Activated CD4-positive, alpha-beta T cell treated with anti-CD3 and anti-CD28 coated beads for 36 hours (primary cell): ENCODE measurements at regions of chr1 and their contacts with region 1.

Region 1: DNA sequence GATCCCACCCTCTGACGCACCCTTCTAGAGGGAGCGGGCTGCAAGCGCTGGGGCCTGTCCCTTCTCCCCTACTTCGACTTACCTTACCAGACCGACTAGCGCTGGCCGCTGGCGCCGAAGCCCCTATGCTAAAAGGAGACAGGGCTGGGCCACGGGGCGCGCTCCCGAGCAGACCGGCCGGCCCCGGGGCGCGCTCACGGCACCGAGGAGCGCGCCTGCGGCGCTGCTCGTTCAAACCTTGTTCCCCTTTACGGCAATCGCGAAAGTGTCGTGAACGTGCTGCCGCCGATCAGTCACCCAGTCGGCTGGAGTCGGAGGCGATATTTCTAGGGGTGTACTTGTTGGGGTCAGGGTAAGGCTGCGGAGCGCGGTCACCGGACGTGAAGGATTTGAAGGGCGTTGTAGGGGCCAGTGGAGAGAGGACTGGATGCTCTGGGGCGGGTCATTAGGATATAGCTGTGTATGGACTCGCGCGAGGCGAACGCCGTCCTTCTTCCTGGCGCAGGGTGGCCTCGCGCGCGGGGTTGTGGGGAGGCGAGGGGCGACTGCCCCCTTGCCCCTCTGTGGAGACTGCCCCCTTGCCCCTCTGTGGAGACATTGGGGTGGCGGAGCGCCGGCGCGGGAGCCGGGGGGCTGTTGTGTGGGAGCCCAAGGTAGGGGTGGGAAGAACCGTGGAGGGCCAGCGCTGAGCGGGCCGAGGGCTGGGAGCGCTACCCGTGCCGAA is at the starts of genes CEPT1 and DRAM2:
- DNase-seq: peak; percentile 98
- ATAC-seq: peak; percentile 78
- H3K4me3 Mint-ChIP-seq: peak within 1 kb of the TSS; percentile 95
- H3K27ac Mint-ChIP-seq: peak within 1 kb of the TSS; percentile 99
- H3K4me1 Mint-ChIP-seq: peaks cover 53% of the 10 kb centered on the region
- H3K27me3 Mint-ChIP-seq: no peaks in the 10 kb centered on the region
- total RNA-seq, gene CEPT1: 34.7 to 49.1 TPM
- total RNA-seq, gene DRAM2: 30.4 to 34.4 TPM

Region 2: GRCh38 chr1:110963691-110964399 is 176.3 kb before region 1 on chr1 and contains the start of gene LRIF1:
- CTCF ChIA-PET with region 1: no interaction called
- POLR2A ChIA-PET with region 1: no interaction called
- intact Hi-C with region 1: loop called in 1 of 2 experiments (anchors 5 kb)
- DNase-seq: peak; percentile 100
- ATAC-seq: peak; percentile 99
- H3K4me3 Mint-ChIP-seq: peak within 1 kb of the TSS; percentile 78
- H3K27ac Mint-ChIP-seq: peak within 1 kb of the TSS; percentile 94
- H3K4me1 Mint-ChIP-seq: peaks cover 30% of the 10 kb centered on the region
- H3K27me3 Mint-ChIP-seq: peaks cover 7% of the 10 kb centered on the region
- total RNA-seq, gene LRIF1: 15.1 to 15.4 TPM

Region 3: DNA sequence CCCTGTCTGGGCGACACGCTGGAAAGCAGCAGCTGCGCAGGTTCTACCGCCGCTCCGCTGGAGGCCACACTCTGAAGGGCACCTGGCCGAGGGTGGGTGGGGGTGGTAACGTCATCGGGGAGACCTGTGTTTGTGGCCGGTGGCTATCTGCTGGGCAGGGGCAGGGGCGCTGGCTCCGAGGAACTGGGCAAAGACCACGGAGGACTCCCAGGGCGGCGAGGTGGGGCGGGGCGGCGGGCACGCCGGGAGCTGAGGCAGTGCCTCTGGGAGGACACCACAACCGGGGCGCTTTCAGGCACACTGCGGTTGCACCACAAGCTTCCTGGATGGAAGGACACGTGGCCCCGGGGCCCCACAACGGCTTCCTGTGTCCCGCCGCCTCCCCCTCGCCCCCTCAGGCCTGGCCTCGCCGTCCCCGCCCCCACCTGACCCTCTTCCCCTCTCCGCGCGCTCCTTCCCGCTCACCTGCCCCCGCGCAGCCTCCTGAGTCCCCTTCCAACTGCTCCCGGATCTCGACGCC is 63.6 kb after region 1 on chr1:
- CTCF ChIA-PET with region 1: interaction called, 3 read pairs
- POLR2A ChIA-PET with region 1: interaction called, 3 read pairs
- intact Hi-C with region 1: loop called in 1 of 2 experiments (anchors 1 kb)
- DNase-seq: peak; percentile 92
- ATAC-seq: peak; percentile 27
- H3K4me3 Mint-ChIP-seq: peak overlapping the region; percentile 96
- H3K27ac Mint-ChIP-seq: peak overlapping the region; percentile 98
- H3K4me1 Mint-ChIP-seq: peaks cover 56% of the 10 kb centered on the region
- H3K27me3 Mint-ChIP-seq: no peaks in the 10 kb centered on the region

Region 4: DNA sequence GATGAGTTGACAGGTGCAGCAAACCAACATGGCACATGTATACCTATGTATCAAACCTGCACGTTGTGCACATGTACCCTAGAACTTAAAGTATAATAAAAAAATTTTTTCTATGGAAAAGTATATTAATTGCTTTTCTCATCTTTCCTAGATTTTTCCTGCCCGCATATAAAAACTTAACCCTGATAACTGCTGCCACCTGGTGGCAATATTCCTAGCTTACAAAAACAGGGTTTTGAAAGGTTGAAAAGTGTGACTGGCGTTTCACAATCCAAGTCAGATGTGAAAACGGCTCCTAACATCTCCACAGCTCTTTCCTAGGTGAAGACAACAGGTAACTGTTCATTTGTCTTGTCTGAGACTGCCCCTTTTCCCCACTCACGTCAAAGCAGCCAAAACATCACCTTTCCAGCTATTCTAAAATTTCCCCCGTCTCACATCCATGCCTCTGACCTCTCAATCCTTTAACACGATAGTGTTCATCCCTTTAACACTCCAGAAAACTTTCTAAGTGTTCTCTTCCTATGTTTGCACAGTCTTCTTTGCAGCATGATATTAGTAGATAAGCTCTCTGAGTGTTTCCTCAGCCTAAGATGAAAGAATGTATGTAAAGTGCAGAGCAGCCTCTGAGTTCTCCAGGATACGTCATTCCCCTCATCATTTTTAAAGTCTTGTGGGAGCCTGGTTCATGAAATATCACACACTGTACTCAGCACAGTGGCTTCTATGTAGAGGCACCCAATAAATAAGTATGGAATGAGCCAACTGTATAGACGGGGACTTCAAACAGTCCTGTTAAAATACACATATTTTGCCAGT is 259.9 kb after region 1 on chr1:
- CTCF ChIA-PET with region 1: interaction called, 3 read pairs
- POLR2A ChIA-PET with region 1: no interaction called
- intact Hi-C with region 1: loop called in 1 of 2 experiments (anchors 5 kb)
- DNase-seq: peak; percentile 65
- ATAC-seq: no peak
- H3K4me3 Mint-ChIP-seq: no peak overlapping the region
- H3K27ac Mint-ChIP-seq: no peak overlapping the region
- H3K4me1 Mint-ChIP-seq: peaks cover 34% of the 10 kb centered on the region
- H3K27me3 Mint-ChIP-seq: no peaks in the 10 kb centered on the region

Region 5: DNA sequence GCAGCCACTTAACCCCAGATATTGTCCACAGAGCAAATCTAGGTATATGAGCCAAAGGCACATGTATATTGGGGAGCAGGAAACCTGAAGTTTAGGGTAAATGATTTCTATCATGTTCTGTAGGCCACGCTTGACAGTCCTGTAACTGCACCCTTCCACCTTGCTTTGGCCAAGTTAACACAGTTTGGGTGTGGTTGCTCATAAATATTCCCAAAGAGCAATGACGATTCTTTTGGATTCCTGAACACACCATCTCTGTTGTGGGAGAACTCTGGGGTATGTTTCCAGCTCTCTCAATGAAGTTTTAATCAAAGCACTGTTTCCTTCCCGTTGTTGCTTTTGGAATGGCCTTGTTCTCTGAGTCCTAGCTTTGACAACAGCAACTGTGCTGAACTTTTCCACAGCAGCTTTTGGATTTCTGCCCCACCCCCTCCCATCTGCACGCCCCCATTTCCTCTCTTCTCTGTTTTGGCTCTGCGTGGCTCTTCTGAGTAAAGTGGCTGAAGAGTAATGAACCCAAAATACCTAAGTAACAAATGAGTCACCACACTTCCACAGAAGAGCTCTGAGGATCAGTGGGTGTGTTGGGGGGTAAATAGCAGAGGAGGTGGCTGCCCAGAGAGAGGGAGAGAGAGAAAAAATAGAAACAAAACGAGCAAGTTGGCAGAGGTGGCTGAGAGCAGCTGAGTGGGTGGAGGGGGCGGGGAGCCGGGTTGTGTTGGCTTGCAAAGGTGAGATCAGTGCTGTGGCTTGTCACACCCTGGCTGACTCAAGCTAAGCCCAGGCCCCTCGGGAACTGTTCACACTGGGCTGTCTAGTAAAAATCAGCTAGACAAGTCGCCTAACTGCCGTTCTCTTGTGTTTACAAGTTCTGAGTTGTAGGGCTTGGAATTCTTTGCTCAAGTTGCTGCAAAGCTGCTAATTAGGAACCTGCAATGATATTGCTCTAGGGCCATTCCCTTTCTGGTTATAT is 452.6 kb after region 1 on chr1:
- CTCF ChIA-PET with region 1: no interaction called
- POLR2A ChIA-PET with region 1: interaction called, 3 read pairs
- intact Hi-C with region 1: loop called in 1 of 2 experiments (anchors 10 kb)
- DNase-seq: peak; percentile 98
- ATAC-seq: peak; percentile 93
- H3K4me3 Mint-ChIP-seq: peak overlapping the region; percentile 63
- H3K27ac Mint-ChIP-seq: peak overlapping the region; percentile 95
- H3K4me1 Mint-ChIP-seq: peaks cover 73% of the 10 kb centered on the region
- H3K27me3 Mint-ChIP-seq: no peaks in the 10 kb centered on the region